ENCODE measurements at regions of chr1 and their contacts with region 1.

Region 1: DNA sequence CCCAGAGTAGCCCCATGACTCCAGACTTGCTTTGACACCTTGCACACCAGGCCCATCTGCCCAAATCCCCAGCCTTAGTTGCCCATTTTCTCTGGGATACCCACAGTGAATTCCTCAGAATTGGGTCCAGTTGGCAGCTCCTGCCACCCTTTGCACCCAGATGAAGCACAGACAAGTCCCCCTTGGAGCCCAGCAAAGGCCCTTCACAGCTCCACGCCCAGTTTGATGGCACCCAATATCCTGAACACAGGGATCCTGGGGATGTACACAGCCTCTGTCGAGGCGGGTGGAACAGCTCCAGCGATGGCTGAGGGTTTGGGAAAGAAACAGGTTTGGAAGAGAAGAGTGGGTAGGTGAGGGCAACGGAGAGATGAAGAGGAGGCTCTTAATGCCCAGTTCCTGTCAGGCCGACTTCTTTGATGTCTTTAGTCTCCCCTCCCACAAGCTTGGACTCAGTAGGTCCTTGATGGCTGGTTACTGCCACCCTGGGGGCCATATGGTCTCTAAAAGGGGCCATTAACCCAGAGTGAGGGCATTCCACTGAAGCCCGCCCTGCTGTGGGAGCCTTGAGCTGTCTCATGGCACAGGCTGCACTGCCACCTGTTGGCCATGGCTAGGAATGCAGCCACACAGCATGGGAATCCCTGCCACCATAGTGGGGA is 21.7 kb downstream of the TMEM53 start:
- H3K4me3 ChIP-seq: no peak overlapping the region
- H3K27ac ChIP-seq: no peak overlapping the region
- H3K4me1 ChIP-seq: no peaks in the 10 kb centered on the region
- CTCF ChIP-seq: peak; percentile 93

Region 2: GRCh38 chr1:44213222-44214112 is 439.1 kb before region 1 on chr1 and contains the start of gene DMAP1:
- CTCF ChIA-PET with region 1: interaction called, 24 read pairs
- POLR2A ChIA-PET with region 1: interaction called, 3 read pairs
- H3K4me3 ChIP-seq: peak within 1 kb of the TSS; percentile 95
- H3K27ac ChIP-seq: no peak within 1 kb of the TSS; the same call in 1 of the 2 replicates
- H3K4me1 ChIP-seq: no peaks in the 10 kb centered on the region
- CTCF ChIP-seq: peak; percentile 71

Region 3: DNA sequence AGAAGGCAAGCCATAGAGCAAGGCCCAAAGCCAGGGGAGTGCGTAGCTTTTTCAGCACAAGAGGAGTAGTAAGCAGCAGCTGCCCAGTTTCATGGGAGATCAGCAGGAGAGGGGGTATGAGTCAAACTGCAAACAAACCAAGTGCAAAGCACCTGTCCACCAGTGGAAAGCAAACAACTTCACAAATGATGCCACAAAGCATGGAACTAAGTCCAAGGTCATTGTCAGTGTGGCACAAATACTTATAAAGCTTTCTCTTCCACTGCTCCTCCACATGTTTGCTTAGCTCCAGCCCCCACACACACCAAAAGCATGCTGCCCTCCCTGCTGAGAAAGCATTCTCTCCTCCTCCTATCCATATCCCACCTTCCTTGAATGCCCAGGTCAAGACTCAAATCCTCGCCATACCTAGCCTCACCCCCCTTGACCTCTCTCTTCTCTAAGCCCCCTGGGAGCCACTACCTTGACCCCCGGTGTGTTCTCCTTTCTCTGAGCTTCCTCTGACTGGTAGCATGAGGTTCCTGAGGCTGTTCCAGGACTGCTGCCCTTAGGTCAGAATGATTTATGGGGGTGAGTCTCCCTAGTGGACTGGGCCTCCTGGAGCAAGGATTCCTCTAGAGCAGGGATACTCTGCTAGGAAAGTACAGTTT is 368.9 kb before region 1 on chr1:
- CTCF ChIA-PET with region 1: no interaction called
- POLR2A ChIA-PET with region 1: no interaction called
- H3K4me3 ChIP-seq: no peak overlapping the region
- H3K27ac ChIP-seq: no peak overlapping the region
- H3K4me1 ChIP-seq: no peaks in the 10 kb centered on the region
- CTCF ChIP-seq: no peak

Region 4: DNA sequence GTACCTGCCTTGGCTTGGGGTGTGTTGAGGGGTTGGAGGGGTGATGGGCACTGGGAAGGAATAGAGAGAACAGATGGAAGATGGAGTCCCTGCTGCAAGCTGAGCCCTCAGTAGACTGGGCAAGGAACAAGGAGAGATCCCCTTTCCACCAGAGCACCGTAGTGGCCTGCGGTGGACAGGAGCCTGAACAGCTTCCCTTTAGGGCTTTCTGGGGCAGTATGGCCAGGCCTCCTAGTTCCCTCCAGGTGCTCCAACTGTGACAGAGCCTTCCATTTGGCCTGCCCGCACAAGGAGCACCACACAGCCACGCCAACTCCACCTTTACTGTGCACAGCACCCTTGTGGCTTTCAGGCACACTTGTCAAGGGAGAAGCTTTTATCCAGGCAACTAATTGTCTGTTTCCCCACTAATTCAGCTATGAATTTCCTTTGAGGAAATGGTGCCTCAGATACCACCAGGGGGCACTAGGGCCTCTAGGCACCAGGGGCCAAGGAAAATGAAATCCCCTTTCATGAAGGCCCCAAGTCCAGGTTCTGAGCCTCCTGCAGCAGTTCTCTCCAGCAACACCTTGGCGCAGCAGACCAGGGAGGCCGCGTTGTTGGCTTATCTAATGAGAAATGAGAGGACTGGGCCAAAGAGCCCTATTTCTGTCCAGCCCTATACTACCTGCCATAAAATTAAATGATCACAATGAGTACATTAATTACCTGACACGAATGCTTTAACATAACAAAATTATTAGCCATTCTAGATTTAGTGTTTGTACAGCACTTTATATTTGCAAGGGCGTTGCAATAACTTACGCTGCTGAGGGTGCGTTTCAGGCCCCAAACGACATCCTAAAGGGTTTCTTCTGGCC is 274.4 kb before region 1 on chr1:
- CTCF ChIA-PET with region 1: interaction called, 46 read pairs
- POLR2A ChIA-PET with region 1: interaction called, 3 read pairs
- H3K4me3 ChIP-seq: no peak overlapping the region
- H3K27ac ChIP-seq: no peak overlapping the region
- H3K4me1 ChIP-seq: no peaks in the 10 kb centered on the region
- CTCF ChIP-seq: peak; percentile 54

Region 5: DNA sequence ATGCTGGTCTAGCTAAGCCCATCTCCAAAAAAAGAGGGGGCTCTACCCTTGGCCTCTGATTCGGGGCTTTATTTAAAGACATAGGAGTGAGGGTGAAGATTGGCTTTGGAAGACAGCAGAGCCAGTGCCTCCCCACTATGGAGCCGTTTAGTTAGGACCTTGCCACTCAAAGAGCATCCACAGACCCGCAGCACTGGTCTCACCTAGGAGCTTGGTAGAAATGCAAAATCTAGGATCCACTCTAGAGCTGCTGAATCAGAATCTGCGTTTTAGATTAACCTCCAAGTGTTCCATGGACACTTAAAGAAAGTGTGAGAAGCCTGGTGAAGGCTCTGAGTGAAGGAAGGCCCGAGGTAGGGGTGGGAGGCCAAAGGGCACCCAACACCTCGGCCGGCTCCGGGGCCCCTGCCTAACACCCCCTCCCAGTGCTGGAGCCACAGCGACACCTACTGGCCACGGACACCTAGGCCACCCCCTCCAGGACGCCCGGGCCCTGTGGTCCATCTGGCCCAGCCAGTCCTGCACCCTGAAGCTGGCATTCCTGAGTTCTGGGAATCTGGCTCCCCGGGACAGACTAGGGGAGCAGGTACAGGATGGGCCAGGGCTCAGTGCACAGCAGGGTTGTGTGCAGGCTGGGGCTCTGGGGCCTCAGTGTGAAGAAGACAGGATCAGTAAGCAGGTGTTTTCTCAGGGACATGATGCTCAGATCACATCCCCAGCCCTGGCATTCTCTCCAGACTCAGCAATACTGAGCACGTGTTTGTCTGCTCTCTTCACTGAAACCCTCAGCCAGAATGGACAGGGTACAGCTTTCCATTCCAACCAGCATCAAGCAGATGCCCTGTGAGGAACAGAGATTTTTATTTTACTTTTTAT is 57.5 kb before region 1 on chr1:
- CTCF ChIA-PET with region 1: interaction called, 15 read pairs
- POLR2A ChIA-PET with region 1: no interaction called
- H3K4me3 ChIP-seq: no peak overlapping the region
- H3K27ac ChIP-seq: no peak overlapping the region
- H3K4me1 ChIP-seq: no peaks in the 10 kb centered on the region
- CTCF ChIP-seq: peak; percentile 87

Region 6: GRCh38 chr1:44609412-44609767 is 43.2 kb before region 1 on chr1:
- CTCF ChIA-PET with region 1: interaction called, 85 read pairs
- POLR2A ChIA-PET with region 1: interaction called, 3 read pairs
- H3K4me3 ChIP-seq: no peak overlapping the region
- H3K27ac ChIP-seq: no peak overlapping the region
- H3K4me1 ChIP-seq: 0 out of 2 replicates have a peak, but pooled peaks cover under 1% of the 10 kb centered on the region
- CTCF ChIP-seq: peak; percentile 37; the same call in 1 of the 2 replicates

Region 7: GRCh38 chr1:44631647-44632539 is 20.7 kb before region 1 on chr1:
- CTCF ChIA-PET with region 1: interaction called, 47 read pairs
- POLR2A ChIA-PET with region 1: interaction called, 21 read pairs
- H3K4me3 ChIP-seq: peak overlapping the region; percentile 69
- H3K27ac ChIP-seq: peak overlapping the region; percentile 100
- H3K4me1 ChIP-seq: no peaks in the 10 kb centered on the region
- CTCF ChIP-seq: no peak

Region 8: DNA sequence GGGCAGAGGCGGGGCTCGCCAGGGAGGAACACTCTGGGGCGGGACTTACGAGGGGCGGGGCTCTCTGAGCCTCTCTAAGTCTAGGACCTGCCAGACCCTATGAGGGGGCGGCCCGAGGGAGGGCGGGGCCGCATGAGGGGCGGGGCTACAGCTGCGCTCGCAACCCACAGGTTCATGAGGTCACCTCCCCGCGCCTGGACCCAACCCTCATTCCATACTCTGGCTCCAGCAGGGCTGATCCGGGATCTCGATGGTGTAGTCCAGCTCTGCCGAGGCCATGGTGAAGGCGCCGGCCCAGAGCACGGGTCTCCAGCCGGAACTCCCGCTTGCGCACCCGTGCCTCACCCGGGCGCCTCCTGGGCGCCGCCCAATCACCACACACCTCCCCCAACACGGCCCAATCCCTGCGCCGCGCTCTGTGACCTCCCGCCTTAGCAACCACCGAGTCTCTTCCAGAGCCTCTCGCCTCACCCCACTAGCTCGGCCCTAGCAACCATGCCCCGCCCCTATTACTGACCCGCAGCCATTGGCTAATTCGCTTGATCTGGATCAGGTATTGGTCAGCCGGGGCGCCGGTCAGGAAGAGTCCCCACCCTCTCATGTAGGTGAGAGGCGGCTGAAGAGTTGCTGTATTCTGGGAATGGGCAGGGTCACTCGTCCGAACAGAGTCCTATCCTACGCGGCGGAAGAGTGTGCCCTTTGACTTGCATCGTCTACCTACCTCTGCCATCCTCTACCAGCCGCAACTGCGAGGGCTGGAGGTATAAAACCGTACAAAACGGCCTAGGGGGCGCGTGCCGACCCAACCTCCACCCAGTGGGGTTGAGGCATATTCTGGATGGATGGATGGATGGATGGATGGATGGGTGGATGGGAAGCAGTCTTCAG is 21.8 kb after region 1 on chr1 and contains the starts of genes ARMH1 and TMEM53:
- CTCF ChIA-PET with region 1: interaction called, 16 read pairs
- POLR2A ChIA-PET with region 1: interaction called, 9 read pairs
- H3K4me3 ChIP-seq: peak within 1 kb of the TSS; percentile 86
- H3K27ac ChIP-seq: no peak within 1 kb of the TSS
- H3K4me1 ChIP-seq: peaks cover 3% of the 10 kb centered on the region; the same call in 1 of the 2 replicates
- CTCF ChIP-seq: no peak; the same call in 1 of the 2 replicates

Measured in HEK293 (cell line).